Spleen (tissue), 13 donors: ENCODE measurements at regions of chr1 and their contacts with region 1.

Region 1: DNA sequence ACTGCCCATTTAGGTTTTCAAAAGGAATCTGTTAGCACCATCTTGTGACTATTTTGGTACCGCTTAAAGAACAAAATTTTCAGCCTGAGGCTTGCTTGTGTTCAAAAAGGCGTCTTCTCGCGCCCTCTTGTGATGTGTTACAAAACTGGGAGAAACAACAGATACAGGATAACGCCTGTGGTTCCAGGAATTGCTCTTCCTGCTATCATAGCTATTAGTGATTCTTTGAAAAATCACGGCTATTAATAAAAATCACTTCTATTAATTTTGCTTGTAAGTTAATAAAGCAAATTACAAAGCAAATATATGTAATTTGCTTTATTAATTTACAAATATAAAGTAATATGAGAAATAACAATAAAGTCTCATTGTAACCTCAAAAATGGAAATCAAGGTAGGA is 82.2 kb upstream of the ABCD3 start:
- DNase-seq: no peak
- H3K4me3 ChIP-seq: no peak overlapping the region
- H3K27ac ChIP-seq: no peak overlapping the region
- H3K4me1 ChIP-seq: peaks cover 4 to 34% (median 13%) of the 10 kb centered on the region in 6 donors
- H3K27me3 ChIP-seq: peaks cover 0 to 9% (median 0%) of the 10 kb centered on the region in 7 donors
- CTCF ChIP-seq: peak; percentile 43 to 92 (median 69)
- POLR2A ChIP-seq: no peak

Region 2: GRCh38 chr1:93179886-93180722 is 1155.8 kb before region 1 on chr1 and contains the start of gene TMED5:
- intact Hi-C with region 1: no loop called
- DNase-seq: peak; percentile 99
- H3K4me3 ChIP-seq: peak within 1 kb of the TSS; percentile 66 to 93 (median 90)
- H3K27ac ChIP-seq: peak within 1 kb of the TSS; percentile 95 to 100 (median 99)
- H3K4me1 ChIP-seq: peaks cover 29 to 68% (median 53%) of the 10 kb centered on the region in 6 donors
- H3K27me3 ChIP-seq: no peaks in the 10 kb centered on the region
- CTCF ChIP-seq: peak in 10 of 11 experiments; percentile 20 to 58 (median 45)
- POLR2A ChIP-seq: peak; percentile 22 to 96 (median 29)
- total RNA-seq, gene TMED5: 49.2 to 102 (median 54.6) TPM

Region 3: DNA sequence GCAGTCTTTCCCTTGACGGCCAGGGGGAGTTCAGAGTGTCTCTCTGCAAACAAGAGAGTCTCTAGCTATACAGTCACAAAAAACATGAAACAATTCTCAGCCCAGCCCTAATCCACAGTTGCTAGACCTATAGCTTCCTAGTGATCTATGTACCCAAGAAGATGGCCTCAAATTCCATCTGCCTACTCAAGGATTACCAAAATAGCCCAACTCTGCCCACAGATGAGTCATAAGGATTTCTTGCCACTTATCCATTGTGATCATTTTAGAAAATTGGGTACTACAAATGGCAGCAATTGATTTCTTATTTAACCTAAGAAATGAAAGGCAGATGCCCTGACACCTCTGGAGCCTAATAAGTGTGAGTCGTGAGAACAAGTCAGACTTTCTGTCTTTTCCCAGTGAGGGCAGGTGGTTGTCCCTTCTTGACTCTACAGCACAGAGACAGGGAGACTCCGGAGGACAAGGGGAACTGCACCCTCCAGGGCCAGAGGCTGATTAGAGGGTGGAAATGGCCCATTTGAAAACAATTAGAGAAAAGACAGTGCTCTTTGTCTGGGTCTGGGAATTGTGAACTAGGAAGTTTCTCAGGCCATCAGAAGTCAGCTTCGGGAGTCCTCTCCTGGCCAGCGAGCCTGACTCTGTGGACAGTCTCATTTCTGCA is 280.4 kb before region 1 on chr1:
- intact Hi-C with region 1: loop called (anchors 5 kb)
- DNase-seq: no peak
- H3K4me3 ChIP-seq: no peak overlapping the region
- H3K27ac ChIP-seq: no peak overlapping the region
- H3K4me1 ChIP-seq: no peaks in the 10 kb centered on the region
- H3K27me3 ChIP-seq: peaks cover 0 to 15% (median 0%) of the 10 kb centered on the region in 7 donors
- CTCF ChIP-seq: no peak
- POLR2A ChIP-seq: no peak

Region 4: DNA sequence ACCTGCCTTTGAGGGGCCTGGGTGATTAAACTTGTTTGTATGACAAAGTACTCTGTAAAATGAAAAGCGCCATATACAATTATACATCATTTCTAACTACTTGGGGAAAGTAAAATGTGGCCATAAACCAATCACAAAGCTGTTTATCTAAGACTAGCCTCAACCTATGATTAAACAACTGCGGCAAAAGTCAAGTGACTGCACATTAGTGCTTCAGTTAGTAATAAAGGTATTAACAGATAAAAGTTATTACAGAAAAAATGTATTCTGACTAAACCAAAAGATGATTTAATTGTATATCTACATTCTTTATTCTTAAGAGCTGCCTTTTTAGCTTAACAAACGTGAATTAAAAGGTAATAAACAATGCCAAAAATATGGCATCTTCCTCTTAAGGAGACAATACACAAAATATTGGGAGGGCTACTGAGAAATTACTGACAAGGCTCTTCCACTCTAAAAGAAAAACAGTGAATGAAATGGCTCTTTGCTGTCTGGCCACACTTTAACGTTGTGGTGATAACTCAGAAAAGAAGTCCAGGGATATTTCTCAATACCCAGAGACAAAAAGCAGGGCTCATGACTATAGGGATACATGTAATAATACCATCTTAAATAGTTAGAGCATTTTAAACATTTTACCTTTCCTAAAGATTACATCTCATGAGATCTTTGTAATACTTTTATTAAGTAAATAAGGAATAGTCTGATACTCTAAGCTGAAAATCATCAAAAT is 107.1 kb before region 1 on chr1:
- intact Hi-C with region 1: no loop called
- DNase-seq: no peak
- H3K4me3 ChIP-seq: no peak overlapping the region
- H3K27ac ChIP-seq: peak overlapping the region in 1 of 8 donors; percentile 31
- H3K4me1 ChIP-seq: peaks cover 3 to 45% (median 15%) of the 10 kb centered on the region in 6 donors
- H3K27me3 ChIP-seq: peaks cover 0 to 21% (median 4%) of the 10 kb centered on the region in 7 donors
- CTCF ChIP-seq: no peak
- POLR2A ChIP-seq: no peak